ENCODE measurements at regions of chrX and their contacts with region 1.

Region 1: DNA sequence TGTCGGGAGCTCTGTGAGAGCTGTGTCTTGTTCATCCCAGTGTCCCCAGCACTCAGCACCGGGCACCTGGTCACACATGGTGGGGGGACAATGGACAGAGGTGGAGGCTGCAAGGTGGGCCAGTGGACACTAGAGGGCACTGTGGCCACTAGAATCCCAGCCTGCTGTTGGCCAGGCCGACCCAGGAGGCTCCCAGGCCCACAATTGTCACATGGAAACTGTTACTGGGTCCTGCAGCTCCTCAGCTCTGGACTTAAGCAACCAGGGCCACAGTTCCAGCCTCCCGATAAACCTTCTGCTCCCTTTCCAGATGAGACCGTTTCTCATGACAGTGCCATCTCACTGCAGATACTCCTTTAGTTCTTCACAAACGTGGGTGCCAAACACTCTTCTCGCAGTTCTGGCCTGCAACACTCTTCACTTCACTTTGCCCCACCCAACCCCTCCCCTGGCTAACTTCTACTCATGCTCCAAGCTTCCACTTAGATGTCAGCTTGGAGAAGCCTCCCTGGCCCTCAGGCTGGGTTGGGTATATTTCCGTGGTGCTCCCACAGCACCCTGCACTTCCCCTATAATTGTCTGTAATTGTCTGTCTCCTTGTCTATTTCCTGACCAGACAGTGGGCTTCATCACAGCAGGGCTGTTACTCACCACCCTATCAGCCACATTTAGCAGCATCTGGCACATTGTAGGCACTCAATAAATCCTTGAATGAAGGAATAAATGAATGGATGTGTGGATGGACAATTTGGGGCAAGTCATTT is 3.5 kb upstream of the IQSEC2 start:
- DNase-seq: no peak
- H3K4me3 ChIP-seq: no peak overlapping the region
- H3K27ac ChIP-seq: no peak overlapping the region
- H3K27me3 ChIP-seq: no peaks in the 10 kb centered on the region
- CTCF ChIP-seq: peak; percentile 67

Region 2: DNA sequence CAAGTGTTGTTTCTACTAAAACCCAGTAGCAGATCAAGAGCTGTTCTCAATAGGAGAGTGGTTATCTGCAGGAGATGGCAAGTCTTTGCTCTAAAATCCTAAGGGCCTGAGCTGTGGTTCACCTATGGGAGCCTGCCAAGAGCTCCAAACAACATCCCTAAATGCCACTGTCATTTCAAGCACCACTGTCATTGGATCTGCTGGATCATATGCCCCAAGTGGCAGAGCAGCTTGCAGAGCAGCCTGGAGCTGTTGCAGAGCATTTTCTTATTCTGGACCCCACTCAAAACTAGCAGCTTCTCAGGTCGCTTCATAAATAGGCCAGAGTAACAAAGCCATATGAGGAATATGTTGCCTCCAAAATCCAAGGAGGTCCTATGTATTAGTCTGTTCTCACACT is 131.3 kb before region 1 on chrX:
- CTCF ChIA-PET with region 1: no interaction called
- POLR2A ChIA-PET with region 1: no interaction called
- DNase-seq: no peak
- H3K4me3 ChIP-seq: no peak overlapping the region
- H3K27ac ChIP-seq: no peak overlapping the region
- H3K27me3 ChIP-seq: no peaks in the 10 kb centered on the region
- CTCF ChIP-seq: no peak

Region 3: DNA sequence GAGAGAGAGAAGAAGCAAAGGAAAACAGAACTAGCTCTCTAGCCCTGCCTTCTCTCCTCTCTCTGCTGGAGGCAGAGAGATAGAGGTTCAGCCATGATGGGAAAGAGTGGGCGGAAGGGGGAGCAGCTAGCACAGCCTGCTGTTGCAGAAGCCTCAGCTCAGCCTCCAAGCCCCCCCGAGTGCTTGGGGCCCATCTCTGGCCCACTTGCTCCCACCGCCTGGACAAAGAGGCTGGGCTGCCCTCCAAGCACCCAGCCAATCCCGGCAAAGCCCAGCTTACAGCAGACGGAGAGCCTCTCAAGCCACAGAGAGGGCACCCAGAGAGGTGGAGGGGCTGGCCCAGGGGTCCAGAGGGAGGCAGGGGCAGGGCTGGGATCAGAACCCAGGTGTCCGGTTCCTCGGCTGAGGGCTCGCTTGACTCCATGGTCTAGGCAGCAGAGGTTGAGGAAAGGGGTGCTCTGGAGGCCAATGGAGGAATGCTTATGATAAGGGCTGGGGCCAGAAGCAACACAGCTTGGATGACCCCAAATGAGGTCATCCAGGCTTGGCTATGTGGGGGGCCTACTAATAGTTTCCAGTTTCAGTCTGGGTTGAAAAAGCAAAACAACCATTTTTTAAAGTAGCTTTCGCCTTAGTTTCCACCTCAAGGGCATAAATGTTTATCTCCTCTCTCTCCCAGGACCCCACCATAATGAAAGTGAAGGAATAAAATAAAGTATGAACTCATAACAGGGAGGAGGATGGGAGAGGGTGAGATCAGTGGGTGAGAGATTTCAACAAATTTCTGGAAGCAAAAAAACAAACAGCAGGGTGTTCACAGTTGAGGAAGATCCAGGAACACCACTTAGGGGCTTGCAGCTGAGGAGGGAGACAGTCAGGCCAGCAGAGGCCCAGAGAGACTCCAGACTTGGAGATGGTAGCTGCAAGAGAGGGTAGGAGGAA is 21.4 kb after region 1 on chrX:
- CTCF ChIA-PET with region 1: interaction called, 15 read pairs
- POLR2A ChIA-PET with region 1: no interaction called
- DNase-seq: no peak
- H3K4me3 ChIP-seq: no peak overlapping the region
- H3K27ac ChIP-seq: no peak overlapping the region
- H3K27me3 ChIP-seq: no peaks in the 10 kb centered on the region
- CTCF ChIP-seq: no peak

Region 4: DNA sequence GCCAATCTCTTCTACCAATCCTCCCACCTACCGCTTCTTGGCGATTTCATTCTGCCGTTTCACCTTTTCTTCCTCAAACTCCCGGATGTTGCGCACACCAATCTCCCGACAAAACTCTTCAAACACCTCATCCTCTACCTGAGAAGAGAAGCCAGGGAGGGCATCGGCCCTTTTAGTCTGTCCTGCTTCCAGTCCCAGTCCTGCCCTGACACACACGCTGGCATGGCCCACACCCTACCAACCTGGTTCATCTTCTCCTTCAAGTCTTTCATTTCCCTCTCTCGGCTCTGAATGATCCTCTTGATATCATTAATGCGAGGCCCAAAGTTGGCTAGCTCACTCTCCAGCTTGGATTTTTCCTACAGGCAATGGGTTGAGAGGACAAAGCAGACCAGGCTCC is 118.7 kb after region 1 on chrX:
- CTCF ChIA-PET with region 1: no interaction called
- POLR2A ChIA-PET with region 1: no interaction called
- DNase-seq: no peak
- H3K4me3 ChIP-seq: no peak overlapping the region
- H3K27ac ChIP-seq: no peak overlapping the region
- H3K27me3 ChIP-seq: no peaks in the 10 kb centered on the region
- CTCF ChIP-seq: no peak

Region 5: DNA sequence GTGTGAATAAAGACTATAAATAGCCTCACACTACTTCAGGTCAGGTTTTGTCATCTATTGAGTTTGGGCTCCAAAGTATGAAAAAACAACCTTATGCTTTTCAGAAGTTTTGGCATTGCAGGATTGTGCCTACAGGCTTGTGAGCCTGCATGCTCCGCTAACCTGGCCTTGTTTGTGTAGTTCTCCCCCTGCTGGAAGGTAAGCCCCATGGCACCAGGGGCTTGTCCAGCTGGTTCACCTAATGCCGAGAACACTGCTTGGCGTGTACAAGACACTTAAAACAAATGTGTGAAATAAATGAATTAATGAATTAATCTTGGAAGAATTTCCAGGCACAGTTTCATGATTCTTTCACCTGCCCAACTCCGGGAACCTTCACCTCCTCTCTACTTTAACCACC is 151.1 kb after region 1 on chrX:
- CTCF ChIA-PET with region 1: interaction called, 11 read pairs
- POLR2A ChIA-PET with region 1: no interaction called
- DNase-seq: no peak
- H3K4me3 ChIP-seq: no peak overlapping the region
- H3K27ac ChIP-seq: no peak overlapping the region
- H3K27me3 ChIP-seq: no peaks in the 10 kb centered on the region
- CTCF ChIP-seq: peak; percentile 85